ENCODE measurements at regions of chr21 and their contacts with region 1.

Region 1: DNA sequence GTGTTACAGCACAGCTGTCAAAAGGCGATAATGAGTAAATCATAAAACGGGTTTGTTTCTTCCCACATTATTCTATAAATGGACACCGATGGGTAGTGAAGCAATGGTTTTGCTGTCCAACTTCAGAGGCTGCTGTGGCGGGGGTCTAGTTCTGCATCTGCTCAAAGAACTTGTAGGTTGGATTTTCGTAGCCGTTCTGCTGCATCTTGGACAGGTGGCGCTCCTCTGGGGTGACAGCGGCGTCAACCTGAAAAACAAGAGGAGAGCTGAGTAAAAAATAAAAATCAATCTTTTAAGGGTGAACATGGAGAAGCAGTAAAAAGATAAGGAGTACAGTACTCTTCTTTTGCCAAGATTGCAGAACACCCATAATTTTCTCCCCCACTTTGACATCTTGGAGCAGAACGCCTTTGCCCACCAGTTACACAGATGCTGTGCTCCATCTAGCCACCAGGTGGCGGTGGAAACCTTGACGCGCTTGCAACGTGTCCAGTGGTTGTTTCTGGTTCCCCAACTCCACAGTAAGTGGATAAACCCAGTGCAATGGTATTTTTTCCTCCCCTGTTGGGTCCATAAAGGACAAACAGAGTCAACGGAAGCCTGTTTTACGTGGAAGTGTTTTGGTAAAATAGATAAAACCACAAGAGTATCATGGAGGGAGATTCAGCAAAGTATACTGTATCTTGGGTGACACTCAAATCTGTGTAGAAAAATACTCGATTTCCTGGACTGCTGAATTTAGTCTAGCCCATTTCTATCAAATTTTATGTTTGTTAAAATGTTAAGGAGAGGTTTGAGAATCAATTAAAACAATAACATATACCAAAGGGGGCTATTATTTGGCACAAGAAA is 147.0 kb downstream of the GABPA start:
- DNase-seq: peak; percentile 87

Region 2: DNA sequence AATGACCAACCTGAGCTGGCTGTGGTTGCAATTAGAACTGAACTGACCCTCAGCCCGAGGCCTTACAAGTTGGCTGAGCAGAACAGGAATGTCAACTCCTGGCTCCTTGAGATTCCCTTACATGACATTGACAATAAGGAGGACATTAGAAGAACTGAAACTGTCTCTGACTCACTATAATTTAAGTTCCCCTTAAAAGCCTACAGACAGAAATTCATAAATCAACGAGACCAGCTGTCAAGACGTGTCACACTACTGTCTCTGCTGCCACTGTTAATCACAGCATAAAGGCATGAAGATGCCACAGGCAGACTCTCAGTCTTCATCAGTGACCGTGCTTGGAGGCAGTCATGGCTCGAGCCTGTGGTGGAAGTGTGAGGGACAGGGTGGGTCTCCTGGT is 21.9 kb after region 1 on chr21:
- intact Hi-C with region 1: no loop called
- DNase-seq: no peak

Region 3: GRCh38 chr21:25956993-25957714 is 75.4 kb after region 1 on chr21:
- intact Hi-C with region 1: no loop called
- DNase-seq: no peak

Region 4: DNA sequence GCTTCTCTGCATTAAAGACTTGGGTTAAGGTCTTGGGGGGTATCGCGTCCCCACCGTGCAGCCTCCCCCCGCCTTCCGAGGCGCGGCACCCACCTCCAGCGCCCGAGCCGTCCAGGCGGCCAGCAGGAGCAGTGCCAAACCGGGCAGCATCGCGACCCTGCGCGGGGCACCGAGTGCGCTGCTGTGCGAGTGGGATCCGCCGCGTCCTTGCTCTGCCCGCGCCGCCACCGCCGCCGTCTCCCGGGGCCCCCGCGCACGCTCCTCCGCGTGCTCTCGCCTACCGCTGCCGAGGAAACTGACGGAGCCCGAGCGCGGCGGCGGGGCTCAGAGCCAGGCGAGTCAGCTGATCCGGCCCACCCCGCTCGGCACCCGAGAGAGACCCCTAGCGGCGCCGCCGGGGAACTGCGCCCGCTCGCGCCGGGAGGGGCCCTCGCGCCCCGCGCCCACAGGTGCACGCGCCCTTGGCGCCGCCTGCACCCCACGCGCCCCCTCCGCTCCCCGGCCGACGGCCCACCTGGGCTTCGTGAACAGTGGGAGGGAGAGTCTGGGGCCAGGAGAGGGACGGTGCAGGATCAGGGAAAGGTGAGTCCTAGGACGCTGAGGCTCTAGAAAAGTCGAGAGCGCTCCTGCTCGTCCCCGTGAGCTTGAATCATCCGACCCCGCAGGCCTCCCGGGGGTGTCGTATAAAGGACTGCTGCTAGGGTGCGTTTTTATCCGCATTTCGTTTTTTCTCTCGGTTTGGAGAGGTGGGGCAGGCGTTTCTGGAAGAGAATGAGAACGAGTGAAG is 288.9 kb after region 1 on chr21 and contains the start of gene APP:
- intact Hi-C with region 1: loop called (anchors 10 kb)
- DNase-seq: peak; percentile 96
- total RNA-seq, gene APP: 410 to 411 TPM